ENCODE measurements at regions of chr15 and their contacts with region 1.

Region 1: GRCh38 chr15:48285329-48286214 is 45.7 kb upstream of the DUT start:
- DNase-seq: no peak
- ATAC-seq: peak; percentile 28
- H3K4me3 Mint-ChIP-seq: no peak overlapping the region
- H3K27ac Mint-ChIP-seq: no peak overlapping the region
- H3K4me1 Mint-ChIP-seq: peaks cover 6% of the 10 kb centered on the region
- H3K27me3 Mint-ChIP-seq: peaks cover 4% of the 10 kb centered on the region
- CTCF ChIP-seq: peak; percentile 69

Region 2: GRCh38 chr15:47196057-47196456 is 1089.5 kb before region 1 on chr15:
- CTCF ChIA-PET with region 1: interaction called, 38 read pairs
- POLR2A ChIA-PET with region 1: no interaction called
- intact Hi-C with region 1: loop called (anchors 1 kb)
- DNase-seq: no peak
- ATAC-seq: no peak
- H3K4me3 Mint-ChIP-seq: no peak overlapping the region
- H3K27ac Mint-ChIP-seq: no peak overlapping the region
- H3K4me1 Mint-ChIP-seq: no peaks in the 10 kb centered on the region
- H3K27me3 Mint-ChIP-seq: no peaks in the 10 kb centered on the region
- CTCF ChIP-seq: no peak

Region 3: GRCh38 chr15:47620965-47621685 is 664.4 kb before region 1 on chr15:
- CTCF ChIA-PET with region 1: no interaction called
- POLR2A ChIA-PET with region 1: no interaction called
- intact Hi-C with region 1: no loop called
- DNase-seq: no peak
- ATAC-seq: no peak
- H3K4me3 Mint-ChIP-seq: no peak overlapping the region
- H3K27ac Mint-ChIP-seq: no peak overlapping the region
- H3K4me1 Mint-ChIP-seq: no peaks in the 10 kb centered on the region
- H3K27me3 Mint-ChIP-seq: no peaks in the 10 kb centered on the region
- CTCF ChIP-seq: no peak

Region 4: DNA sequence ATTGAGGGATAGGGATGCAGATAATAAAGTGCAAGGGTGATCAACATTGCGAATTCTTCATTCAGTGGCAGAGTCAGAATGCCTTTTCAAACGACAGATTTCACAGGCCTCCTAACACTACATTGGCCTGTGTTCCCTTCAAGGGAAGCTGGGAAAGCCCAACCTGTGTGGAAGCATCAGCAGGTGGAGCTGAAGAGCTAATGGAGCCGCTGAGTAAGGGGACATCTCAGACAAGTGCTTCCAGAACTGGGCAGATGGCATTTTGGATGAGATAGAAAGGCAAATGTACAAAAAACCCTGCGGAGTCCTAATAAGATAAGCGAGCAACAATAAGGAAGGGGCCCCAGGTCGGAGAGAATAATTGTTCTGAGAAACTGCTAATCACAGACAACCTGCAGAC is 173.3 kb before region 1 on chr15:
- CTCF ChIA-PET with region 1: interaction called, 4 read pairs
- POLR2A ChIA-PET with region 1: no interaction called
- intact Hi-C with region 1: loop called (anchors 1 kb)
- DNase-seq: no peak
- ATAC-seq: no peak
- H3K4me3 Mint-ChIP-seq: no peak overlapping the region
- H3K27ac Mint-ChIP-seq: no peak overlapping the region
- H3K4me1 Mint-ChIP-seq: no peaks in the 10 kb centered on the region
- H3K27me3 Mint-ChIP-seq: peaks cover 19% of the 10 kb centered on the region
- CTCF ChIP-seq: no peak